Naive thymus-derived CD4-positive, alpha-beta T cell (primary cell): ENCODE measurements at regions of chr3 and their contacts with region 1.

Region 1: GRCh38 chr3:115783938-115784738 is 160.8 kb downstream of the GAP43 start:
- DNase-seq: peak; percentile 88 to 94 (median 92)
- ATAC-seq: peak; percentile 92
- H3K4me3 ChIP-seq: peak overlapping the region; percentile 54
- H3K4me3 Mint-ChIP-seq: peak overlapping the region; percentile 80 to 97 (median 91)
- H3K27ac ChIP-seq: peak overlapping the region; percentile 99
- H3K27ac Mint-ChIP-seq: peak overlapping the region; percentile 79 to 99 (median 98)
- H3K4me1 ChIP-seq: peaks cover 3% of the 10 kb centered on the region in 2 donors
- H3K4me1 Mint-ChIP-seq: peaks cover 8 to 16% (median 14%) of the 10 kb centered on the region in 7 donors
- H3K27me3 ChIP-seq: no peaks in the 10 kb centered on the region
- H3K27me3 Mint-ChIP-seq: peaks cover 0 to 25% (median under 1%) of the 10 kb centered on the region in 5 donors

Region 2: GRCh38 chr3:114056130-114057010 is 1727.8 kb before region 1 on chr3 and contains the starts of genes CCDC191 and QTRT2:
- CTCF ChIA-PET with region 1: no interaction called
- POLR2A ChIA-PET with region 1: no interaction called
- intact Hi-C with region 1: loop called (anchors 1 to 2 kb)
- DNase-seq: peak; percentile 82 to 99 (median 98)
- ATAC-seq: peak; percentile 97
- H3K4me3 ChIP-seq: peak within 1 kb of the TSS; percentile 95
- H3K4me3 Mint-ChIP-seq: peak within 1 kb of the TSS; percentile 91 to 100 (median 98)
- H3K27ac ChIP-seq: peak within 1 kb of the TSS; percentile 91
- H3K27ac Mint-ChIP-seq: peak within 1 kb of the TSS; percentile 87 to 99 (median 97)
- H3K4me1 ChIP-seq: peaks cover 10 to 12% of the 10 kb centered on the region in 2 donors
- H3K4me1 Mint-ChIP-seq: peaks cover 24 to 60% (median 55%) of the 10 kb centered on the region in 7 donors
- H3K27me3 ChIP-seq: no peaks in the 10 kb centered on the region
- H3K27me3 Mint-ChIP-seq: peaks cover 0 to 2% (median 0%) of the 10 kb centered on the region in 5 donors
- total RNA-seq, gene CCDC191: 3.9 to 8.8 (median 5.1) TPM
- total RNA-seq, gene QTRT2: 29.9 to 38.8 (median 33.8) TPM

Region 3: GRCh38 chr3:115040673-115041286 is 743.4 kb before region 1 on chr3:
- CTCF ChIA-PET with region 1: no interaction called
- POLR2A ChIA-PET with region 1: no interaction called
- intact Hi-C with region 1: loop called (anchors 2 kb)
- DNase-seq: peak in 7 of 9 donors; percentile 15 to 48 (median 30)
- ATAC-seq: peak; percentile 66
- H3K4me3 ChIP-seq: no peak overlapping the region
- H3K4me3 Mint-ChIP-seq: no peak overlapping the region
- H3K27ac ChIP-seq: no peak overlapping the region
- H3K27ac Mint-ChIP-seq: peak overlapping the region in 2 of 9 donors; percentile 3 to 51
- H3K4me1 ChIP-seq: no peaks in the 10 kb centered on the region
- H3K4me1 Mint-ChIP-seq: peaks cover 0 to 35% (median 16%) of the 10 kb centered on the region in 7 donors
- H3K27me3 ChIP-seq: no peaks in the 10 kb centered on the region
- H3K27me3 Mint-ChIP-seq: no peaks in the 10 kb centered on the region

Region 4: DNA sequence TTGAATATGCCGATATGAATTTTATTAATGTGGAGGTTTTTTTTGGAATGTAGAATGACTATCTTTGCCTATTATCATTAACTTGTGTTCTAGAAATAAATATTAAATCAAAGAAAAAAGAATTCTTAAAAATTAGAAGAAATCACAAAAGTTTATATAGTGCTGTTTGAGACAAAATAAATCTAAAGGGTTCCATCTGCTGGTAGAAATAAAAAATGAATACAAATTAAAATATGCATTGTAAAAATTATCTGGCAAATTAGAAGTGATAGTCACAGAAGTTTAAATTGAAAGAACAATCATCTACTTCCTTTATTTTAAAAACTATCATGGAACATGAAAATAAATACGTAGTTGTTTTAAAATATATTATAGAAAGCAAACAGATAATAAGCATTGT is 614.3 kb before region 1 on chr3:
- CTCF ChIA-PET with region 1: interaction called, 5 read pairs
- POLR2A ChIA-PET with region 1: no interaction called
- intact Hi-C with region 1: loop called (anchors 5 kb)
- DNase-seq: peak in 5 of 9 donors; percentile 14 to 36 (median 23)
- ATAC-seq: no peak
- H3K4me3 ChIP-seq: no peak overlapping the region
- H3K4me3 Mint-ChIP-seq: no peak overlapping the region
- H3K27ac ChIP-seq: no peak overlapping the region
- H3K27ac Mint-ChIP-seq: no peak overlapping the region
- H3K4me1 ChIP-seq: peaks cover 11 to 13% of the 10 kb centered on the region in 2 donors
- H3K4me1 Mint-ChIP-seq: peaks cover 7 to 13% (median 12%) of the 10 kb centered on the region in 7 donors
- H3K27me3 ChIP-seq: no peaks in the 10 kb centered on the region
- H3K27me3 Mint-ChIP-seq: peaks cover 0 to 10% (median 0%) of the 10 kb centered on the region in 5 donors

Region 5: GRCh38 chr3:115512565-115513415 is 271.3 kb before region 1 on chr3:
- CTCF ChIA-PET with region 1: no interaction called
- POLR2A ChIA-PET with region 1: no interaction called
- intact Hi-C with region 1: loop called in 1 of 2 experiments (anchors 1 kb)
- DNase-seq: peak in 4 of 9 donors; percentile 1 to 9 (median 8)
- ATAC-seq: peak; percentile 57
- H3K4me3 ChIP-seq: peak overlapping the region; percentile 55
- H3K4me3 Mint-ChIP-seq: peak overlapping the region; percentile 82 to 94 (median 90)
- H3K27ac ChIP-seq: no peak overlapping the region
- H3K27ac Mint-ChIP-seq: peak overlapping the region in 4 of 9 donors; percentile 41 to 78 (median 46)
- H3K4me1 ChIP-seq: peaks cover 0 to 5% of the 10 kb centered on the region in 2 donors
- H3K4me1 Mint-ChIP-seq: peaks cover 5 to 24% (median 13%) of the 10 kb centered on the region in 7 donors
- H3K27me3 ChIP-seq: no peaks in the 10 kb centered on the region
- H3K27me3 Mint-ChIP-seq: peaks cover 38 to 62% (median 45%) of the 10 kb centered on the region in 5 donors

Region 6: GRCh38 chr3:115814778-115815380 is 30.7 kb after region 1 on chr3:
- CTCF ChIA-PET with region 1: interaction called, 7 read pairs
- POLR2A ChIA-PET with region 1: interaction called, 4 read pairs
- intact Hi-C with region 1: loop called (anchors 1 kb)
- DNase-seq: peak; percentile 21 to 65 (median 46)
- ATAC-seq: peak; percentile 61
- H3K4me3 ChIP-seq: no peak overlapping the region
- H3K4me3 Mint-ChIP-seq: no peak overlapping the region
- H3K27ac ChIP-seq: no peak overlapping the region
- H3K27ac Mint-ChIP-seq: peak overlapping the region in 1 of 9 donors; percentile 69
- H3K4me1 ChIP-seq: no peaks in the 10 kb centered on the region
- H3K4me1 Mint-ChIP-seq: peaks cover 0 to 5% (median 0%) of the 10 kb centered on the region in 7 donors
- H3K27me3 ChIP-seq: no peaks in the 10 kb centered on the region
- H3K27me3 Mint-ChIP-seq: peaks cover 0 to 31% (median 12%) of the 10 kb centered on the region in 5 donors

Region 7: DNA sequence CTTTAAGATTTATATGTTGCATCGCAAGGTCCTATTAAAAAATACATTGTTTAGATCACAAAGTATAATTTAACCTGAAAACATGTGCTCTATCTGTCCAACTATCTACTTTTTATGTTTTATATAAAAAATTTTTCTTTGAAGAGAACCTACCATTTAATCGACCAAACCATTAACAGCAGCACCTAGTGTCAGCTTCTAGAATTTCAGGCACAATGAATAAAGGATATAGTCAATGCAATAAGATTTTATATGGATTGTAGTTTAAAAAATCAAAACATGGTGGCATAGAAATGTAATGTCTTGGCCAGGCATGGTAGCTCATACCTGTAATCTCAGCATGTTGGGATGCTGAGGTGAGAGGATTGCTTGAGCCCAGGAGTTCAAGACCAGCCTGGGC is 152.9 kb after region 1 on chr3:
- CTCF ChIA-PET with region 1: no interaction called
- POLR2A ChIA-PET with region 1: no interaction called
- intact Hi-C with region 1: no loop called
- DNase-seq: no peak
- ATAC-seq: no peak
- H3K4me3 ChIP-seq: no peak overlapping the region
- H3K4me3 Mint-ChIP-seq: no peak overlapping the region
- H3K27ac ChIP-seq: no peak overlapping the region
- H3K27ac Mint-ChIP-seq: no peak overlapping the region
- H3K4me1 ChIP-seq: no peaks in the 10 kb centered on the region
- H3K4me1 Mint-ChIP-seq: no peaks in the 10 kb centered on the region
- H3K27me3 ChIP-seq: no peaks in the 10 kb centered on the region
- H3K27me3 Mint-ChIP-seq: peaks cover 0 to 8% (median 2%) of the 10 kb centered on the region in 5 donors